ENCODE measurements at regions of chr18 and their contacts with region 1.

Region 1: DNA sequence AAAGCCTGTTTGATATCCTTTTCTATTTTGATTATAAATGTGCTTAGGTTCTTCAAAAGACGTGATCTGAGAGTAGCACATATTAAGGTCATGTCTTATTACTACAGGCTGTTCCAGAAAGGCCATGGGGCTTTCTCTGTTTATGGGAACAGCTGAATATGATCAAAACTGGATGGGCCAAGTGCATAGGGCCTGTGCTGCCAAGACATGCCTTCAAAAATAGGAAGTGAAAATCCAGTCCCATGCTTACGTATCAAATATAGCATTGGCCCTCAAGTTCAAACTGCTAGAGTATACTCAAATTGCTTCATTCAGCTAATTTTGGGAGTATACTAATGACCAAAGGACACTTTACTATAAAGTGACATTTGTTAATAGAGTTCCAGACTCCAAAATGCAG is 24.1 kb downstream of the SLC25A52 start:
- DNase-seq: no peak
- H3K4me3 ChIP-seq: no peak overlapping the region
- CTCF ChIP-seq: no peak

Region 2: DNA sequence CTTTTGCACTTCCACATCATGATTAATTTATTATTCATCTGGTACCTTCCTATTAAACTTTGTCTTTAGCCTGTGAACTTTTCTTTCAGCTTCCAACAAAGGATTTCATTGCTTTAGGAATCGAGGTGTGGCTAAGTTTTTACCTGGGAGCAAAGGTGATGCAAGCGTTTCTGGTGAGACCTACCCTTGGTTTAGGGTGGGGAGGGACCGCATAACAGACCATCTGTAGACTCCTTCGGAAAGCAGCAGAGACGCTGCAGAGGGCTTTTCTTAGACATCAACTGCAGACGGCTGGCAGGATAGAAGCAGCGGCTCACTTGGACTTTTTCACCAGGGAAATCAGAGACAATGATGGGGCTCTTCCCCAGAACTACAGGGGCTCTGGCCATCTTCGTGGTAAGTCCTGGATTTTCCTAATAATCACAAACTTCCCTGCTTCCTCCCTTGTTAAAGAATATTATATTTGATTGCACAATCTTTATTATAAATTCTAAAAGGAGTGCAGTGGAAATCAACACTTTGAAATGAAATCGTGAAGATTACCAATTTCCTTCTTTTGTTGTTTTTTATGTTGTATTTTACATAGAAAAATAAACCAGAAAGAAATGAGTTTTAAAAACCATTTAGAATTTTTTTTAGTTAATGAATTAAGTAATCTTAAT is 289.0 kb before region 1 on chr18 and contains the start of gene DSG3:
- CTCF ChIA-PET with region 1: no interaction called
- POLR2A ChIA-PET with region 1: no interaction called
- DNase-seq: no peak
- H3K4me3 ChIP-seq: no peak within 1 kb of the TSS
- CTCF ChIP-seq: no peak

Region 3: DNA sequence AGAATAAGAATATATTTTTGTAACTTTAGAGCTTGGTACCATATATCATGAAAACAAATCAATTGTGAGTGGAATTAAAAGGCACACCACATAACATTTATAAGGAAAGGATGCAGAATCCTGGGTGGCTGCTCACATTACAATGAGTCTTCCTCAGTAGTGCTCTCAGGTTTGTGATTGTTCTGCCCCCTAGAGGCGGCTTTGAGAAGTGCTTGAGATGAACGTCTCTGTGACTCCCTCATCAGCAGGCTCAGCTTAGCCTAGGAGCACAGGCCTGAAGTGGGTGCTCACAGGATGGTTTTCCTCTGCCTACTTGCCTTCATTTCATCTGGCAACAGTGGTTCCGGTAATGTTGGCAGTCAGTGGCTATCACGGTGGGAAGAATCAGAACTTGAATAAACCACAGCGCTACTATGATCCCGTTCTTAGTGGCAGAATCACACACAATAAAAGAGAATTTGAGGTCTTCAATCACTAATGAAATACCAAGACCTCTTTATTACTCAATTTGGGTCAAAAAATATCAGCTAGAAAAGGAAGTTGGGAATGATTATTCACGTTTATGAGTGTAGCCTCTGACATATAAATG is 14.2 kb before region 1 on chr18:
- CTCF ChIA-PET with region 1: interaction called, 10 read pairs
- POLR2A ChIA-PET with region 1: no interaction called
- DNase-seq: no peak
- H3K4me3 ChIP-seq: no peak overlapping the region
- CTCF ChIP-seq: peak; percentile 86

Region 4: GRCh38 chr18:31814132-31814531 is 77.5 kb after region 1 on chr18:
- CTCF ChIA-PET with region 1: no interaction called
- POLR2A ChIA-PET with region 1: no interaction called
- DNase-seq: no peak
- H3K4me3 ChIP-seq: no peak overlapping the region
- CTCF ChIP-seq: no peak

Region 5: GRCh38 chr18:31828613-31829012 is 92.0 kb after region 1 on chr18:
- CTCF ChIA-PET with region 1: no interaction called
- POLR2A ChIA-PET with region 1: no interaction called
- DNase-seq: no peak
- H3K4me3 ChIP-seq: no peak overlapping the region
- CTCF ChIP-seq: no peak

Region 6: DNA sequence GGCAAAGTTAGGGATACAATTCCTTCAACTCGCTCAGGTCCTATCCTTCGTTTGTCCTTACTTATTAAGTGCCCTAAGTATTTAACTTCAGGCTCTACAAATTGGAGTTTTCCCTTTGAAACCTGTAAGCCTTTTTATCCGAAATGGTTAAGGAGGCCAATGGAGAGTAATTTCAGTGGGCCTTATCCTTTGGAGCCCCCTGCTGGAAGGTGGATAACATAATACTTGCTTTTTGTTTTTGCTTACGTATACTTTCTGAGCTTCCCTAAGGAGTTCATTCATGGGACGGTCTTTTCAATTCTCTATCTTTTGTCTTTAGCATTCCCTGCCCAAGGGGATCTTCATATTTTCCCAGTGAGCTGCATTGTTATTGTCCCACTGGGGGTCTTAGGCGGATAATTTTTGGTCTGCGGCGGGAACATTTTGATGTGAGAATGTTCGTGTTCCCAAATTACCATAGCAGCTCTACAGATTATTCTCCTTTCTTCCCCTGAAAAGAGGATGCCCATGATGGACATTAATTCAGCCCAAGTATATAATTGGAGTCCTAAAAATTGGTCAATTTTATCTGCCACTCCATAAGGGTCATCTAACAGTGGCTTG is 240.7 kb after region 1 on chr18:
- CTCF ChIA-PET with region 1: interaction called, 13 read pairs
- POLR2A ChIA-PET with region 1: no interaction called
- DNase-seq: no peak
- H3K4me3 ChIP-seq: no peak overlapping the region
- CTCF ChIP-seq: peak; percentile 54

Region 7: GRCh38 chr18:32010124-32010738 is 273.6 kb after region 1 on chr18:
- CTCF ChIA-PET with region 1: no interaction called
- POLR2A ChIA-PET with region 1: no interaction called
- DNase-seq: no peak
- H3K4me3 ChIP-seq: no peak overlapping the region
- CTCF ChIP-seq: no peak